ENCODE measurements at regions of chr4 and their contacts with region 1.

Region 1: DNA sequence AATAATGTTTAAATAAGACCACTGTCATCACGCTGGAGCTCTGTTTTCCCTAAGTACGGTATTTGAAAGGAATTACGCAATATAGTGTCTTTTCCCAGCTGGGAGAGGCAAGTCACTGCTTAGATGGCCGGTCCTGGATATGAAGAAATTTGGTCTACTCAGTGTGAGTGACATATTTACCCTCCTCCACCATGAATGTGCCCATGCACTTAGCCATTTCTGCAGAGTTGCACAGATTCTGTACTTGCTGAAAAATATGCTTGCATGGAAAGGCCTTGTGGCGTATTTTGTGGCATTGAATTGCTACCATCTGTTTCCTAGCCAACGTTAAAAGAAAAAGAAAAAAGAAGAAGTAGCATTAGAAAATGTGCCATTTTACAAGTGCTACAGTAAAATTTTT is 73.1 kb downstream of the ADGRL3 start:
- DNase-seq: no peak
- H3K4me3 ChIP-seq: peak overlapping the region in 1 of 2 donors; percentile 37
- H3K27ac ChIP-seq: peak overlapping the region; percentile 3 to 14
- H3K4me1 ChIP-seq: peaks cover 0 to 13% of the 10 kb centered on the region in 2 donors
- H3K27me3 ChIP-seq: no peaks in the 10 kb centered on the region
- CTCF ChIP-seq: no peak

Region 2: GRCh38 chr4:61200187-61200915 is 72.9 kb before region 1 on chr4 and contains the start of gene ADGRL3:
- intact Hi-C with region 1: loop called (anchors 5 kb)
- DNase-seq: peak in 1 of 2 donors; percentile 68
- H3K4me3 ChIP-seq: peak within 1 kb of the TSS; percentile 83 to 88
- H3K27ac ChIP-seq: peak within 1 kb of the TSS; percentile 68 to 72
- H3K4me1 ChIP-seq: no peaks in the 10 kb centered on the region
- H3K27me3 ChIP-seq: no peaks in the 10 kb centered on the region
- CTCF ChIP-seq: no peak
- total RNA-seq, gene ADGRL3: 22.2 TPM

Region 3: DNA sequence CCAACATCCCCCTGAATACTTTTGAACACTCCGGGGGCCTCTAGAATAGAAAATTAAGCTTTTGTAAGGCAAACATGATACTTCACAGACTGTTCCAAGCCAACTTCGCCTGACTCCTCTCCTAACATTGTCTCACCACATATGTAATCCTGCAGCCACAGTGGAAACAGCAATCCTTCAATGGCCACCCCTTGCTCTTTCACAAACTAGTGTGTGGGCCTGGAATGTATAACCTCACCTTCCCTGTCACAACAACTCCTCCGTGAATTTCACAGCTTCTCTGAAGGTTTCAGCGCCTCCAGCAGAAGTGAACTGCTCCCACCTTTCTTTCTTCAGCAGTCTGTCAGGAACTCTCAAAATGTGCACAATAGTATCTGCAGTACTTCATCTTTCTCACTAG is 112.0 kb after region 1 on chr4:
- intact Hi-C with region 1: no loop called
- DNase-seq: no peak
- H3K4me3 ChIP-seq: no peak overlapping the region
- H3K27ac ChIP-seq: no peak overlapping the region
- H3K4me1 ChIP-seq: no peaks in the 10 kb centered on the region
- H3K27me3 ChIP-seq: no peaks in the 10 kb centered on the region
- CTCF ChIP-seq: no peak